IMR-90 (cell line): ENCODE measurements at regions of chrX and their contacts with region 1.

Region 1: GRCh38 chrX:109632906-109633504 is 8.0 kb upstream of the KCNE5 start:
- DNase-seq: peak; percentile 26
- ATAC-seq: peak; percentile 37; the same call in 1 of the 2 replicates
- H3K4me3 ChIP-seq: no peak overlapping the region
- H3K27ac ChIP-seq: no peak overlapping the region
- H3K4me1 ChIP-seq: no peaks in the 10 kb centered on the region
- H3K27me3 ChIP-seq: no peaks in the 10 kb centered on the region; the same call in 1 of the 2 replicates
- CTCF ChIP-seq: peak; percentile 50
- POLR2A ChIP-seq: no peak
- RAD21 ChIP-seq: peak; percentile 50

Region 2: GRCh38 chrX:109485470-109486340 is 147.3 kb before region 1 on chrX:
- CTCF ChIA-PET with region 1: interaction called, 3 read pairs
- POLR2A ChIA-PET with region 1: no interaction called
- dilution Hi-C with region 1: no loop called
- in situ Hi-C with region 1: no loop called
- intact Hi-C with region 1: loop called (anchors 2 kb)
- DNase-seq: peak; percentile 66
- ATAC-seq: peak; percentile 80
- H3K4me3 ChIP-seq: no peak overlapping the region
- H3K27ac ChIP-seq: no peak overlapping the region
- H3K4me1 ChIP-seq: no peaks in the 10 kb centered on the region
- H3K27me3 ChIP-seq: peaks cover 9% of the 10 kb centered on the region
- CTCF ChIP-seq: peak; percentile 100
- POLR2A ChIP-seq: no peak
- RAD21 ChIP-seq: peak; percentile 75

Region 3: DNA sequence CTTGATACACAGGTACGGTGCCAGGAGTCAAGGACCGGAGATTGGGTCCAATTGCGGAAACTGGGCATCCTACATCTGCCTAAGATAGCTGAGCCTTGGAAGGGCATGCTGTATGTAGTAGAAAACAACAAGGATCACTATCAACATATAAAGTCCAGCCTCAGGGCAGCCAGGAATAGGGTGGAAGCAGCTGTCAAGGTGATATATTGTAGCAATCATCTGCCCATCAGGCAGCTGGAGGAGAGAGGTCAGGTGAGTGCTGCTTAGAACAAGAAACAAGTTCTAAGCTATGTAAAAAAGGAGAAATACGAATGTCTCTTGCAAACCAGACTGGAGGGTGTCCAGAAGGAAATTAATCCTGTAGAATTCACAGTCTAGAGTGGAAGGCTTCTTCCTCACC is 42.8 kb before region 1 on chrX:
- CTCF ChIA-PET with region 1: no interaction called
- POLR2A ChIA-PET with region 1: interaction called, 12 read pairs
- dilution Hi-C with region 1: no loop called
- in situ Hi-C with region 1: no loop called
- intact Hi-C with region 1: no loop called
- DNase-seq: no peak
- ATAC-seq: no peak
- H3K4me3 ChIP-seq: no peak overlapping the region
- H3K27ac ChIP-seq: no peak overlapping the region
- H3K4me1 ChIP-seq: no peaks in the 10 kb centered on the region
- H3K27me3 ChIP-seq: peaks cover 14% of the 10 kb centered on the region
- CTCF ChIP-seq: no peak
- POLR2A ChIP-seq: no peak
- RAD21 ChIP-seq: no peak